ENCODE measurements at regions of chr3 and their contacts with region 1.

Region 1: GRCh38 chr3:15377961-15378791 is 45.8 kb upstream of the SH3BP5 start:
- DNase-seq: peak; percentile 87 to 95
- ATAC-seq: peak; percentile 95 to 98 (median 98)
- H3K4me3 ChIP-seq: no peak overlapping the region
- H3K27ac ChIP-seq: peak overlapping the region in 9 of 10 donors; percentile 31 to 77 (median 61)
- H3K4me1 ChIP-seq: peaks cover 0 to 9% (median 4%) of the 10 kb centered on the region in 9 donors
- H3K27me3 ChIP-seq: no peaks in the 10 kb centered on the region
- CTCF ChIP-seq: peak; percentile 63 to 90 (median 87)

Region 2: GRCh38 chr3:15332405-15333098 is 45.6 kb before region 1 on chr3 and contains the start of gene SH3BP5:
- intact Hi-C with region 1: loop called in 8 of 10 experiments (anchors 5 kb)
- DNase-seq: peak; percentile 69 to 76
- ATAC-seq: peak; percentile 86 to 93 (median 90)
- H3K4me3 ChIP-seq: peak within 1 kb of the TSS; percentile 68 to 98 (median 85)
- H3K27ac ChIP-seq: peak within 1 kb of the TSS in 9 of 10 donors; percentile 69 to 97 (median 87)
- H3K4me1 ChIP-seq: peaks cover 0 to 51% (median 43%) of the 10 kb centered on the region in 9 donors
- H3K27me3 ChIP-seq: no peaks in the 10 kb centered on the region
- CTCF ChIP-seq: peak; percentile 63 to 95 (median 81)
- total RNA-seq, gene SH3BP5: 6.7 to 22.4 (median 9.4) TPM

Region 3: DNA sequence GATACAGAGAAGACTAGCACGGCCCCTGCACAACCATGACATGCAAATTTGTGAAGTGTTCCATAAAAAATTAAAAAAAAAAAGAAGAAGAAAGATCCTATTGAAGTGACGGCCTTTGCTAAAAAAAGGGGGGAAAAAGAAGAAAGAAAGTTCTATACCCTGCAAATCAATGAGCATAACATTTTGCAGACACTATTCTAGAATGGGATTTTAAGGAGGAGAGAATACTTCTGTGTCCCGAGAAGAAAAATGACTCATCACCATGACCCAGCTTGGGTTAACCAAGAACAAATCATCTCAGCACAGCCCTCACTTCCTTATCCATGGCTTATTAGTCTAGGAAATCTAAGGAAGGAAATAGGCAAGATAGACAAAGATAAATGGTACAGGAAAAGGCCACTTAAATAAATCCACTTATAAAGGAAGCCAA is 38.4 kb before region 1 on chr3:
- intact Hi-C with region 1: loop called in 1 of 10 experiments (anchors 5 kb)
- DNase-seq: no peak
- ATAC-seq: peak in 2 of 8 donors; percentile 47 to 57
- H3K4me3 ChIP-seq: no peak overlapping the region
- H3K27ac ChIP-seq: no peak overlapping the region
- H3K4me1 ChIP-seq: peaks cover 0 to 24% (median 0%) of the 10 kb centered on the region in 9 donors
- H3K27me3 ChIP-seq: no peaks in the 10 kb centered on the region
- CTCF ChIP-seq: no peak

Region 4: DNA sequence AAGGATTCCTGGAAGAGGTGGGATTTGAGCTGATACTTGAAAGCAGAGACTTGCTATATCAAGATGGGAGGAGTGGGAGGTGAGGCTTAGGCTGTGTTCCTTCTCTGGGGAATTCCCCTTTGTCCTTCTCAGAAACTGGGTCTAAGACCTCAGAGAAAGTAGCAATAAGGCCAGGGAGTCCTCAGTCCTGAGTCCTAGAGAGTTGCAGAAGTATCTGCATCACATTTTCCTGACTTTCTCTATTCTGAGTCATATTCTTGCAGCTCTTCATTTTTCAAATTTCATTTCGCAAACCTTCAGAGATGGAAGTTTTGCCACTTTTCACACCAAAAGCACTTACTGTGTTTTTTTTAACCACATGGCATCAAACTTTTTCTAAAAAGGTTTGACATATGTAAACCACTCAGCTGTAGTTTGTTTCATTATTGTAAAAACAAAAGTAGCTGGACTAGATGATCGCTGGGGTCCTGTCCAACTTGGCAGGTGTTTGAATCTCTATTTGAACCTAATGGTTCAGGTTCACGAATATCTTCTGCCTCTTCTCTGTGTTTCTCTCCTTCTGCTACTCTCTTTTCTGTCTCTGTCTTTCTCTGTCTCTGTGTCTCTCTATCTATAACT is 122.0 kb after region 1 on chr3:
- intact Hi-C with region 1: no loop called
- DNase-seq: no peak
- ATAC-seq: no peak
- H3K4me3 ChIP-seq: no peak overlapping the region
- H3K27ac ChIP-seq: no peak overlapping the region
- H3K4me1 ChIP-seq: peaks cover 0 to 57% (median 21%) of the 10 kb centered on the region in 9 donors
- H3K27me3 ChIP-seq: no peaks in the 10 kb centered on the region
- CTCF ChIP-seq: no peak

Measured in heart right ventricle (tissue), 16 donors.